Activated CD8-positive, alpha-beta memory T cell treated with anti-CD3 and anti-CD28 coated beads, Interleukin-2, amount 10 ng/mL, durations not matched to agents 7 days and 5 days (primary cell): ENCODE measurements at regions of chr1 and their contacts with region 1.

Region 1: DNA sequence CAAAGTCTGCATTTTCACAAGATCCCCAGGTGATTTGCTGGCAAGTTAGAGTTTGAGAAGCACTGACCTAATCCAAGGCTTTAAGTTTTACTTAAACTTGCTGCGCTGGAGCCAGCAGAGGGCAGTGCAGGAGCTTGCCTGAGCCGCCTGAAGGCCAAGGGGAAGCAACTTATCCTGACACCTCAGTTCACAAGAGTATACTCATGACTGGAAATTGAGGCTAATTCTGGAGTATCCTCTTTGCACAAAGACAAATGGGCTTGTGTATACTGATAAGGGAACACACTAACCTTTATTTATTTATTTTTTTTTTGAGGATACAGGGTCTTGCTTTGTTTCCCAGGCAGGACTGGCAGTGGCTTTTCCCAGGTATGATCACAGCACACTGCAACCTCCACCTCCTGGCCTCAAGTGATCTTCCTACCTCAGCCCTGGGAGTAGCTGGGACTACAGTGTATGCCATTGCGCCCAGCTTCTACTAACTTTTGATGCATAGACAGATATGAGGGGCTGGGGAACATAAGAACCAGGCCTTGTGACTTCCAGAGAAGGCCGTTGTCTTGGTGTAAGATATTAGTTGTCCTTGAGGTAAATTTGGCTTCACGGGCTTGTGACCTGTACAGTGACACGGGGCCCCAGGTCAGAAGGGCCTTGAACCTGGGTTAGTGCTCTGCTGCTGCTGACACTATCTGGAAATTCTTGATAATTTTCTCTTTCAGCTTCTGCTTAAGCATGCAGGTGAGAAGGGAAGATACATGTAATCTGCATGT is 29.0 kb upstream of the SLAMF1 start:
- DNase-seq: peak; percentile 90
- ATAC-seq: peak; percentile 88
- H3K4me3 Mint-ChIP-seq: peak overlapping the region; percentile 10
- H3K27ac Mint-ChIP-seq: peak overlapping the region; percentile 58
- H3K4me1 Mint-ChIP-seq: peaks cover 37% of the 10 kb centered on the region
- H3K27me3 Mint-ChIP-seq: no peaks in the 10 kb centered on the region

Region 2: GRCh38 chr1:160590488-160590887 is 85.3 kb before region 1 on chr1:
- CTCF ChIA-PET with region 1: no interaction called
- DNase-seq: no peak
- ATAC-seq: no peak
- H3K4me3 Mint-ChIP-seq: no peak overlapping the region
- H3K27ac Mint-ChIP-seq: no peak overlapping the region
- H3K4me1 Mint-ChIP-seq: peaks cover 8% of the 10 kb centered on the region
- H3K27me3 Mint-ChIP-seq: no peaks in the 10 kb centered on the region

Region 3: DNA sequence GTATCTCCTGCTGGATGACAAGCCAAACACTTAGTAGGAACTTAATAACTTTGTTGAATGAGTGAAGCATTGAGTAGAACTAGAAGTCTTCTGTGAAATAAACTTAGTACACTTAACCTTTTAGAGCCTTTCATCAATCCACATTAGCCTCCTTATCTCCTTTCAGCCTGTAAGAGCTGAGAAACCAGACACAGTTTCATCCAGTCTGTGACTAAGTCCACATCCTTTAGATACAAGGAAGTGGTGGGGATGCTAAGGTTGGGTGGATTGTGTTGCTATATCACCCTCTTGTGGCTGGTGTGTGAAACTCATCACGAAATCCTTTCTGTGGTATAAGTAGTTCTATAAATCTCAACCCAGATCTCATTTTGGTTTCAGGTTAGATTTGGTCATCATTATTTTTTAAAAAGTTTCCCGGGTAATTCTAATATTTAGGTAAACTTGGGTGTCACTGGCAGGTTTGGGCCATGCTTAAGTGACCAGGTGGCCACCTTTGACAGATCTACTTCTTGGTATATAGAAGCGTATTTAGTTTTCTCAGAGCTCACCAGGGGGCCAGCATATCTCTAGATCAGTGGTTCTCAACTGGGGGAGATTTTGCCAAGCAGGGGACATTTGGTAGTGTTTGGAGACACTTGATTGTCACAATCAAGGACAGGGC is 68.7 kb before region 1 on chr1:
- CTCF ChIA-PET with region 1: interaction called, 10 read pairs
- DNase-seq: peak; percentile 83
- ATAC-seq: peak; percentile 98
- H3K4me3 Mint-ChIP-seq: no peak overlapping the region
- H3K27ac Mint-ChIP-seq: peak overlapping the region; percentile 85
- H3K4me1 Mint-ChIP-seq: peaks cover 57% of the 10 kb centered on the region
- H3K27me3 Mint-ChIP-seq: no peaks in the 10 kb centered on the region

Region 4: DNA sequence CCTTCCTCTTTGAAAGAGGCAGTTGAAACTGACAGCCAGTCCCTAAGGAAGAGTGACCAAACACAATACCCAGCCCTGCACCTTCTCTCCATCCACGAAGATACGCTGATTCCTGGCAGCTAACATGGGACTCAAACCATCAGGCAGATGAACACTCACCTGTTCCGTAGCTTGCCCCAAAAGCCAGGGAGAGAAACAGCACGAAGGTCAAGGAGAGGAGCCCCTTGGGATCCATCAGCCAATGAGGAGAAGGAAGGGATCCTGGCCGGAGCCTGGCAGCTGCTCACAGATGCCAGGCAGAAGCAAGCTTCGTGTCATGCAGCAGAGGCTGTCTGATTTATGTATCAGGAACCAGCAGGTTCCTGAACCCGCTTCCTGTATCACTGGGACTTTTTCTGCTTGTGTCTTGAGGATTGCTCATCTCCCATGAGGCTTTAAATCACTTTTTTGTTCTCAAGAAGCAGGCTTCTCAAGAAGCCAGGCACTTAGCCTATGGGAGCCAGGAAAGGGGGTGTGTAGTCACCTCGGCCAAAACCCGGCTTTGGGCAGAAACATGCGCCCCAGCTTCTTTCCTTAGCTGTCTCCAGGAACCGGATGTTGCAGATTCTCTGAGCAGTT is 29.0 kb before region 1 on chr1 and contains the start of gene SLAMF1:
- CTCF ChIA-PET with region 1: interaction called, 28 read pairs
- DNase-seq: peak; percentile 60
- ATAC-seq: peak; percentile 63
- H3K4me3 Mint-ChIP-seq: peak within 1 kb of the TSS; percentile 97
- H3K27ac Mint-ChIP-seq: peak within 1 kb of the TSS; percentile 92
- H3K4me1 Mint-ChIP-seq: peaks cover 61% of the 10 kb centered on the region
- H3K27me3 Mint-ChIP-seq: no peaks in the 10 kb centered on the region
- total RNA-seq, gene SLAMF1: 59.3 to 105 TPM

Region 5: GRCh38 chr1:160704250-160704649 is 28.4 kb after region 1 on chr1:
- CTCF ChIA-PET with region 1: interaction called, 61 read pairs
- DNase-seq: no peak
- ATAC-seq: no peak
- H3K4me3 Mint-ChIP-seq: peak overlapping the region; percentile 6
- H3K27ac Mint-ChIP-seq: peak overlapping the region; percentile 29
- H3K4me1 Mint-ChIP-seq: peaks cover 64% of the 10 kb centered on the region
- H3K27me3 Mint-ChIP-seq: no peaks in the 10 kb centered on the region

Region 6: DNA sequence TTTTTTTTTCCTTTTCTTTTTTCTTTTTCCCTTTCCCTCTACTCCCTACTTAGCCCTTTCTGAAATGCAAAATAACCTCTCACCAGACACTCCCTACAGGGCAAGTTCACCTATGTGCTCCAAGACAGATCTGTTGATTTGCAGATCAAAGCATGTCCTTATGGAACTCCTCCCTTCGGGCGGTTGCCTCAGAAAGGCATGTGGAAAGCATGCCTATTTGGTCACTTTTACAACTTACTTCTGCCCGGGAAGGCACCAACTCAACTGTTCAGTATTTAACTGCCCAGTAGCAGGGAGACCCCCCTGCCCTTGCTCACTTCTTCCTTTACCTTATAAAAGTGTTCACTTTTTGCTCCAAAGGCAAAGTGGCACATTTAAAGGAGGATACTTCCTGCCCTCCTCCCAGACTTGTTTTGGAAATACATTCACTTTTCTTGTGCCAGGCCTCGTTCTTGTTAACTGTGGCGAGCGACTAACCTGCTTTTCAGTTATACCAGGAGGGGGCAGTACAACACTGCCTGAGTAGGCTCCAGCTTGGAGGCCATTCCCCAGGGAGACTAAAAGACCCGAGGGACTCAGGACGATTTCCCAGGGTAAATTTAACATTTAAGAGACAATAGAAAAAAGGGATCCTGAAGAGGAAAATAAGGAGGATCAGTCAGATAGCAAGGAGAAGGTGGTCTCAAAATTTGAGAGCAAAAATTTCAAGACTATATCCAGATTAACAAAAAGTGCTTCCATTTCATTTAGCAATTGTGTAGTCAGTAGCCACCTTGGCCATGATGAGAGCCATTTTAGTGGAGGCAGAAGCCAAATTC is 50.9 kb after region 1 on chr1:
- CTCF ChIA-PET with region 1: interaction called, 139 read pairs
- DNase-seq: peak; percentile 83
- ATAC-seq: peak; percentile 75
- H3K4me3 Mint-ChIP-seq: no peak overlapping the region
- H3K27ac Mint-ChIP-seq: no peak overlapping the region
- H3K4me1 Mint-ChIP-seq: peaks cover 24% of the 10 kb centered on the region
- H3K27me3 Mint-ChIP-seq: no peaks in the 10 kb centered on the region

Region 7: GRCh38 chr1:160777486-160778089 is 101.8 kb after region 1 on chr1:
- CTCF ChIA-PET with region 1: interaction called, 29 read pairs
- DNase-seq: peak; percentile 66
- ATAC-seq: peak; percentile 52
- H3K4me3 Mint-ChIP-seq: no peak overlapping the region
- H3K27ac Mint-ChIP-seq: peak overlapping the region; percentile 22
- H3K4me1 Mint-ChIP-seq: peaks cover 28% of the 10 kb centered on the region
- H3K27me3 Mint-ChIP-seq: no peaks in the 10 kb centered on the region

Region 8: GRCh38 chr1:160901768-160902167 is 225.9 kb after region 1 on chr1:
- CTCF ChIA-PET with region 1: no interaction called
- DNase-seq: no peak
- ATAC-seq: no peak
- H3K4me3 Mint-ChIP-seq: no peak overlapping the region
- H3K27ac Mint-ChIP-seq: no peak overlapping the region
- H3K4me1 Mint-ChIP-seq: no peaks in the 10 kb centered on the region
- H3K27me3 Mint-ChIP-seq: peaks cover 26% of the 10 kb centered on the region